B cell (primary cell): ENCODE measurements at regions of chr15 and their contacts with region 1.

Region 1: GRCh38 chr15:64430000-64430735 is 30.2 kb upstream of the ZNF609 start:
- DNase-seq: no peak
- ATAC-seq: no peak
- H3K4me3 ChIP-seq: no peak overlapping the region
- H3K4me3 Mint-ChIP-seq: no peak overlapping the region
- H3K27ac ChIP-seq: no peak overlapping the region
- H3K27ac Mint-ChIP-seq: no peak overlapping the region
- H3K4me1 ChIP-seq: no peaks in the 10 kb centered on the region
- H3K4me1 Mint-ChIP-seq: no peaks in the 10 kb centered on the region
- H3K27me3 ChIP-seq: no peaks in the 10 kb centered on the region
- H3K27me3 Mint-ChIP-seq: no peaks in the 10 kb centered on the region
- CTCF ChIP-seq: no peak

Region 2: DNA sequence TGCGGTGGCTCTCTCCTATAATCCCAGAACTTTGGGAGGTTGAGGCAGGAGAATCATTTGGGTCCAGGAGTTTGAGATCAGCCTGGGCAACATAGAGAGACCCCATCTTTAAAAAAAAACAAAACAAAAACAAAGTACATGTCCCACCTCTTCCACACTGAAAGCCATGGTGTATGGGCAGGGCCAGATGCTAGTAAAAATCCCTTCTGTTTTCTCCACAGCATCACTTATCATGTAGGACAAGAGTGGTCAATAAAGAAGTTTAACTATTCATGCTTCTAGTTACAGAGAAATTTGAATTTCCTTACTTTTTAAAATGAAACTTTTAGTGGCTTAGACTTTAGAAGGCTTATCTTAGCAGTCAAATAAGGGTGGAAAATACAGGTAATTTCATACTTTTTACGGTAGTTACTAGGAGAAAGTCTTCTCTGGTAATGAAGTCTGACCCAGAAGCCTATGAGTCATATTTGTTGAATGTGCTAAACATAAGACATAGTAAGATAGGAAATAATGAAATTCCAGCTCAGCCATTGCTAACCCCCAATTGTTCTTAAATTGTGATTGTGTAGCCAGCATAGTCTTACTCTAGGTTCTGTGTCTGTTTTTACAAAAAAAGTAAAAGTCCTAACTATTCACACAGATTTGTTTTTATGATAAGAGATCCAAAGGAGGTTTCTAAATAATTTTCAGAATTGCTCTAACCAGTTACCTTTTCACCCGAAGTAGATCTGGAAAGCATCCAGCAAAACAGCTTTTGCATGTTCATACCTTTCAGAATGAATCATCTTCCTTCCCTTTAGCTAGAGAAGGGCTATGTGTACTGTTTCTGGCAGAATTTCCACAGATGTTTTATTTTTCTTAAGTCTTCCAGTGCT is 13.8 kb after region 1 on chr15:
- CTCF ChIA-PET with region 1: no interaction called
- POLR2A ChIA-PET with region 1: no interaction called
- intact Hi-C with region 1: no loop called
- DNase-seq: no peak
- ATAC-seq: no peak
- H3K4me3 ChIP-seq: no peak overlapping the region
- H3K4me3 Mint-ChIP-seq: no peak overlapping the region
- H3K27ac ChIP-seq: no peak overlapping the region
- H3K27ac Mint-ChIP-seq: no peak overlapping the region
- H3K4me1 ChIP-seq: peaks cover 10 to 11% of the 10 kb centered on the region in 2 donors
- H3K4me1 Mint-ChIP-seq: peaks cover 17% of the 10 kb centered on the region
- H3K27me3 ChIP-seq: no peaks in the 10 kb centered on the region
- H3K27me3 Mint-ChIP-seq: no peaks in the 10 kb centered on the region
- CTCF ChIP-seq: no peak

Region 3: DNA sequence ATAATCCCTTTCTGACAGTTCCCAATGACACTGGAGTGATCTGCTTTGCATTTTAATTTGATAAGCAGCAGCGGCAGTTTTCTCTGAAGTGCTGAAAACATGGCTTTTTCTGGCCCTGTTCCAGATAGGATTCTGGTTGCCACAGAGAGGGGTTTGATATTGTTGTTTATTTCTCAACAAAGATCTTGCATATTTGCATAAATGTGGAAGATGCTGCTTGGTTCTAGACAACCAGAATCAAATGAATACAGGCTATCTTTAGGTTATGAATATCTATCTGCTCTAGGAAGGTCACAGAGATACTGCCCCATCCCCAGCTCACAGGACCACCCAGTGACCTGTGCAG is 167.3 kb after region 1 on chr15:
- CTCF ChIA-PET with region 1: no interaction called
- POLR2A ChIA-PET with region 1: no interaction called
- intact Hi-C with region 1: no loop called
- DNase-seq: no peak
- ATAC-seq: no peak
- H3K4me3 ChIP-seq: peak overlapping the region in 2 of 5 experiments; percentile 36 to 58
- H3K4me3 Mint-ChIP-seq: peak overlapping the region; percentile 75
- H3K27ac ChIP-seq: peak overlapping the region in 1 of 2 donors; percentile 66
- H3K27ac Mint-ChIP-seq: peak overlapping the region; percentile 78
- H3K4me1 ChIP-seq: peaks cover 21 to 22% of the 10 kb centered on the region in 2 donors
- H3K4me1 Mint-ChIP-seq: peaks cover 52% of the 10 kb centered on the region
- H3K27me3 ChIP-seq: no peaks in the 10 kb centered on the region
- H3K27me3 Mint-ChIP-seq: no peaks in the 10 kb centered on the region
- CTCF ChIP-seq: no peak

Region 4: DNA sequence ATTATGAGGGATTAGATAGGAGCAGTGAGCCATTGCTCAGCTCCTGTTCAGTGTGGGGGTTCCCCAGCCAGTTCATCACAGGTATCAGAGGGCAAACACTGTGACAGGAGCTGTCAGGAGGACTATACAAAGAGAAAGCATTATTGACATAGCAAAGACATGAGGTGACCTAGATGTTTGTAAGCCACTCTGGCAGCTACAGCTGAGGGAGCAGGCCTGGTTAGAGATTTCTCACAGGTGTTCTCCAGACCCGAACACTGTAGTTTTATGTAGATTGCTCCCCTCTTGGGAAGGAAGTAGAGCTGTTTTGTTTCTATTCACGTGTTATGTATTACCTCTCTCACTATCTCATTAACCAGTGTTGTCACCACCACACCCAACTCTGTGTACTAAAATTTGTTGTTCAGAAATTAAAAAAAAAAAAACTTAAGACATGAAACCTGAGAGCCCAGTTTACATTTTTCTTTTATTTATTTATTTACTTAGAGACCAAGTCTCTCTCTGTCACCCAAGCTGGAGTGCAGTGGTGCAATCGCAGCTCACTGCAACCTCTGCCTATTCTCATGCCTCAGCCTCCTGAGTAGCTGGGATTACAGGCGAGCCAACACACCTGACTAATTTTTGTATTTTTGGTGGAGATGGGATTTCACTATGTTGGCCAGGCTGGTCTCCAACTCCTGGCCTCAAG is 221.5 kb after region 1 on chr15:
- CTCF ChIA-PET with region 1: interaction called, 21 read pairs
- POLR2A ChIA-PET with region 1: no interaction called
- intact Hi-C with region 1: loop called (anchors 5 kb)
- DNase-seq: peak; percentile 70
- ATAC-seq: peak; percentile 76
- H3K4me3 ChIP-seq: no peak overlapping the region
- H3K4me3 Mint-ChIP-seq: peak overlapping the region; percentile 27
- H3K27ac ChIP-seq: peak overlapping the region; percentile 45 to 60
- H3K27ac Mint-ChIP-seq: peak overlapping the region; percentile 71
- H3K4me1 ChIP-seq: peaks cover 10 to 13% of the 10 kb centered on the region in 2 donors
- H3K4me1 Mint-ChIP-seq: peaks cover 17% of the 10 kb centered on the region
- H3K27me3 ChIP-seq: no peaks in the 10 kb centered on the region
- H3K27me3 Mint-ChIP-seq: no peaks in the 10 kb centered on the region
- CTCF ChIP-seq: no peak